ENCODE measurements at regions of chr4 and their contacts with region 1.

Region 1: GRCh38 chr4:145895056-145895455 is 43.6 kb downstream of the ZNF827 start:
- DNase-seq: no peak
- ATAC-seq: no peak
- H3K4me3 ChIP-seq: no peak overlapping the region
- H3K27ac ChIP-seq: no peak overlapping the region
- H3K4me1 ChIP-seq: peaks cover 9% of the 10 kb centered on the region
- H3K27me3 ChIP-seq: no peaks in the 10 kb centered on the region
- CTCF ChIP-seq: no peak
- EP300 ChIP-seq: no peak
- POLR2A ChIP-seq: no peak
- RAD21 ChIP-seq: no peak

Region 2: GRCh38 chr4:145828802-145829485 is 66.1 kb before region 1 on chr4:
- CTCF ChIA-PET with region 1: no interaction called
- POLR2A ChIA-PET with region 1: no interaction called
- RAD21 ChIA-PET with region 1: no interaction called
- SMC1A ChIA-PET with region 1: no interaction called
- in situ Hi-C with region 1: no loop called
- intact Hi-C with region 1: no loop called
- DNase-seq: no peak
- ATAC-seq: peak; percentile 75
- H3K4me3 ChIP-seq: no peak overlapping the region
- H3K27ac ChIP-seq: peak overlapping the region; percentile 77
- H3K4me1 ChIP-seq: peaks cover 37% of the 10 kb centered on the region
- H3K27me3 ChIP-seq: no peaks in the 10 kb centered on the region
- CTCF ChIP-seq: no peak
- EP300 ChIP-seq: peak; percentile 22 to 51; a peak in 2 of 4 replicates
- POLR2A ChIP-seq: no peak
- RAD21 ChIP-seq: no peak

Region 3: GRCh38 chr4:145881989-145882388 is 13.1 kb before region 1 on chr4:
- CTCF ChIA-PET with region 1: interaction called, 7 read pairs
- POLR2A ChIA-PET with region 1: interaction called, 3 read pairs
- RAD21 ChIA-PET with region 1: interaction called, 6 read pairs
- SMC1A ChIA-PET with region 1: interaction called, 20 read pairs
- in situ Hi-C with region 1: no loop called
- intact Hi-C with region 1: no loop called
- DNase-seq: no peak
- ATAC-seq: peak; percentile 57
- H3K4me3 ChIP-seq: peak overlapping the region; percentile 40; the same call in 1 of the 2 replicates
- H3K27ac ChIP-seq: peak overlapping the region; percentile 45
- H3K4me1 ChIP-seq: peaks cover 32% of the 10 kb centered on the region
- H3K27me3 ChIP-seq: no peaks in the 10 kb centered on the region
- CTCF ChIP-seq: no peak
- EP300 ChIP-seq: no peak
- POLR2A ChIP-seq: no peak
- RAD21 ChIP-seq: no peak

Region 4: DNA sequence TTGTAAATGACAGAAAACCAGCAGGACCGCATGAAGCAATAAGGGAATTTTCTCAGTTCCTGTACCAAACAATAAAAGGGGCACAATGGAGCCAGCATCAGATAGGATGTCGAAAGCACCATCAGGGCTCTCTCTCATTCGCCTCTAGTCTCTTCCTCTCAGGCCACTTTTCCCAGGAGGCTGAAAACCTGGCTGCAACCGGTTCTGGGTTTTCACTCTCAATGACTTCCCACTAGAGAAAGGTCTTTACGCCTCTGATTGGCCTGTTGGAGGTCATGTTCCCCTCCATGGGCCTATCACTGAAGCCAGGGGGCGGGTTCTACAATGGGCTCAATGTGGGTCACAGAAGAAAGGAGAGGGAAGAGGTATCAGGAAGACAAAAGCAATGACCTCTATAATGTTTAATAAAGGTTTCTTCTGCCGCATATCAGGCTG is 14.2 kb after region 1 on chr4:
- CTCF ChIA-PET with region 1: interaction called, 13 read pairs
- POLR2A ChIA-PET with region 1: interaction called, 5 read pairs
- RAD21 ChIA-PET with region 1: interaction called, 3 read pairs
- SMC1A ChIA-PET with region 1: interaction called, 14 read pairs
- in situ Hi-C with region 1: no loop called
- intact Hi-C with region 1: loop called (anchors 1 kb)
- DNase-seq: no peak
- ATAC-seq: peak; percentile 85
- H3K4me3 ChIP-seq: no peak overlapping the region
- H3K27ac ChIP-seq: no peak overlapping the region
- H3K4me1 ChIP-seq: peaks cover 5% of the 10 kb centered on the region; the same call in 1 of the 2 replicates
- H3K27me3 ChIP-seq: no peaks in the 10 kb centered on the region
- CTCF ChIP-seq: no peak
- EP300 ChIP-seq: no peak
- POLR2A ChIP-seq: no peak
- RAD21 ChIP-seq: no peak